Sigmoid colon (tissue), 7 donors: ENCODE measurements at regions of chr3 and their contacts with region 1.

Region 1: GRCh38 chr3:107938143-107938542 is 152.7 kb downstream of the CD47 start:
- DNase-seq: no peak
- H3K4me3 ChIP-seq: no peak overlapping the region
- H3K27ac ChIP-seq: no peak overlapping the region
- H3K4me1 ChIP-seq: peaks cover 0 to 16% (median 7%) of the 10 kb centered on the region in 4 donors
- H3K27me3 ChIP-seq: no peaks in the 10 kb centered on the region
- CTCF ChIP-seq: peak in 3 of 4 experiments; percentile 30 to 46 (median 39)
- EP300 ChIP-seq: no peak
- POLR2A ChIP-seq: no peak

Region 2: GRCh38 chr3:107884719-107885460 is 53.3 kb before region 1 on chr3:
- intact Hi-C with region 1: no loop called
- DNase-seq: no peak
- H3K4me3 ChIP-seq: no peak overlapping the region
- H3K27ac ChIP-seq: no peak overlapping the region
- H3K4me1 ChIP-seq: no peaks in the 10 kb centered on the region
- H3K27me3 ChIP-seq: no peaks in the 10 kb centered on the region
- CTCF ChIP-seq: no peak
- EP300 ChIP-seq: no peak
- POLR2A ChIP-seq: no peak

Region 3: GRCh38 chr3:107987036-107987947 is 49.1 kb after region 1 on chr3:
- intact Hi-C with region 1: no loop called
- DNase-seq: peak; percentile 94
- H3K4me3 ChIP-seq: no peak overlapping the region
- H3K27ac ChIP-seq: peak overlapping the region; percentile 71 to 78 (median 76)
- H3K4me1 ChIP-seq: peaks cover 0 to 38% (median 32%) of the 10 kb centered on the region in 4 donors
- H3K27me3 ChIP-seq: no peaks in the 10 kb centered on the region
- CTCF ChIP-seq: no peak
- EP300 ChIP-seq: peak in 1 of 4 donors; percentile 41
- POLR2A ChIP-seq: no peak

Region 4: GRCh38 chr3:108406661-108407206 is 468.6 kb after region 1 on chr3:
- intact Hi-C with region 1: loop called (anchors 10 kb)
- DNase-seq: no peak
- H3K4me3 ChIP-seq: no peak overlapping the region
- H3K27ac ChIP-seq: no peak overlapping the region
- H3K4me1 ChIP-seq: peaks cover 0 to 24% (median 9%) of the 10 kb centered on the region in 4 donors
- H3K27me3 ChIP-seq: no peaks in the 10 kb centered on the region
- CTCF ChIP-seq: peak; percentile 7 to 53 (median 48)
- EP300 ChIP-seq: no peak
- POLR2A ChIP-seq: peak in 1 of 2 donors; percentile 33

Region 5: GRCh38 chr3:108477511-108478147 is 539.5 kb after region 1 on chr3:
- intact Hi-C with region 1: loop called (anchors 10 kb)
- DNase-seq: no peak
- H3K4me3 ChIP-seq: no peak overlapping the region
- H3K27ac ChIP-seq: no peak overlapping the region
- H3K4me1 ChIP-seq: no peaks in the 10 kb centered on the region
- H3K27me3 ChIP-seq: no peaks in the 10 kb centered on the region
- CTCF ChIP-seq: peak; percentile 34 to 69 (median 43)
- EP300 ChIP-seq: no peak
- POLR2A ChIP-seq: no peak

Region 6: DNA sequence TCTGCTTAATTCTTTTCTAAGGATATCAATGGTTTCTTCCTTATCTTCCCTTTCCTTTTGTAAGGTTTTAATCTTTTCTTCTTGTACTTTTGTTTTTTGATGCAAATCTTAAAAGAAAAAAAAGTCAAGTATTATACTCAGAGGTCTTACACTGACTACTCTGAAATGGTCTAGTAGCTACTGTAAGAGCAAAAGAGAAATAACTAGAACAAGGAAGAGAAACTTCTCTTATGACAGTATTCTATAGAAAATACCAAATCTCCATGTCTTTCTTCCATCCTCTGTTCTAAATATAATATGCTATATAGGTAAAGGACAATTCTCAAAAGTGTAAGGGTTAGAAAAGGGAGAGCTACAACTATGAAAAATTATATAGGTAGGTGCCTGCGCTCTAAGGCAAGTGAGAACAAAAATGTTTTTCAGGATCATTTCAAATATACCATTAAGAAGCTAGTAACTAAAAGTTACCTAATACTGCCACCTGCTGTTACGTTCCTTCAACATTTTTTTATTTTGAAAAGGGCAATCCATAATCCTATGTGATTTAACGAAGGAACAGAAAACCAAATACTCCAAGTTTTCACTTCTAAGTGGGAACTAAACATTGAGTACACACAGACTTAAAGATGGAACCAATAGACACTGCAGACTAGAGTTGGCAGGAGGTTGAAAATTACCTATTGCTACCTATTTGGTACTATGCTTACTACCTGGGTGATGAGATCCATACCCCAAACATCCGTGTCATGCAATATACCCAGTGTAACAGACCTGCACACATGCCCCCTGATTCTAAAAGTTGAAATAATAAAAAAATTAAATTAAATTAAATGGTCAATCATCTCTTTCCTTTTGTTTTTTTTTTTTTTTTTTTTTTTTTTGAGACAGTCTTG is 614.4 kb after region 1 on chr3:
- intact Hi-C with region 1: loop called (anchors 10 kb)
- DNase-seq: no peak
- H3K4me3 ChIP-seq: no peak overlapping the region
- H3K27ac ChIP-seq: no peak overlapping the region
- H3K4me1 ChIP-seq: no peaks in the 10 kb centered on the region
- H3K27me3 ChIP-seq: no peaks in the 10 kb centered on the region
- CTCF ChIP-seq: peak in 3 of 4 experiments; percentile 14 to 42 (median 21)
- EP300 ChIP-seq: no peak
- POLR2A ChIP-seq: no peak